Naive thymus-derived CD4-positive, alpha-beta T cell (primary cell): ENCODE measurements at regions of chr4 and their contacts with region 1.

Region 1: GRCh38 chr4:56799824-56800756 is 21.4 kb downstream of the SPINK2 start:
- DNase-seq: peak; percentile 57 to 88 (median 81)
- ATAC-seq: peak; percentile 99
- H3K4me3 ChIP-seq: peak overlapping the region; percentile 56
- H3K4me3 Mint-ChIP-seq: peak overlapping the region; percentile 91 to 100 (median 94)
- H3K27ac ChIP-seq: peak overlapping the region; percentile 72
- H3K27ac Mint-ChIP-seq: peak overlapping the region; percentile 40 to 96 (median 92)
- H3K4me1 ChIP-seq: peaks cover 0 to 2% of the 10 kb centered on the region in 2 donors
- H3K4me1 Mint-ChIP-seq: peaks cover 5 to 33% (median 22%) of the 10 kb centered on the region in 7 donors
- H3K27me3 ChIP-seq: no peaks in the 10 kb centered on the region
- H3K27me3 Mint-ChIP-seq: peaks cover 0 to 28% (median 0%) of the 10 kb centered on the region in 5 donors

Region 2: GRCh38 chr4:56424697-56425514 is 375.2 kb before region 1 on chr4:
- CTCF ChIA-PET with region 1: interaction called, 13 read pairs
- POLR2A ChIA-PET with region 1: no interaction called
- intact Hi-C with region 1: loop called in 1 of 2 experiments (anchors 1 kb)
- DNase-seq: peak in 7 of 9 donors; percentile 22 to 59 (median 48)
- ATAC-seq: peak; percentile 49
- H3K4me3 ChIP-seq: no peak overlapping the region
- H3K4me3 Mint-ChIP-seq: no peak overlapping the region
- H3K27ac ChIP-seq: no peak overlapping the region
- H3K27ac Mint-ChIP-seq: peak overlapping the region in 1 of 9 donors; percentile 1
- H3K4me1 ChIP-seq: no peaks in the 10 kb centered on the region
- H3K4me1 Mint-ChIP-seq: peaks cover 4 to 27% (median 13%) of the 10 kb centered on the region in 7 donors
- H3K27me3 ChIP-seq: no peaks in the 10 kb centered on the region
- H3K27me3 Mint-ChIP-seq: no peaks in the 10 kb centered on the region

Region 3: GRCh38 chr4:56505269-56506130 is 294.6 kb before region 1 on chr4 and contains the start of gene ARL9:
- CTCF ChIA-PET with region 1: no interaction called
- POLR2A ChIA-PET with region 1: no interaction called
- intact Hi-C with region 1: loop called in 1 of 2 experiments (anchors 1 kb)
- DNase-seq: peak; percentile 49 to 77 (median 68)
- ATAC-seq: peak; percentile 96
- H3K4me3 ChIP-seq: peak within 1 kb of the TSS; percentile 67
- H3K4me3 Mint-ChIP-seq: peak within 1 kb of the TSS; percentile 66 to 96 (median 88)
- H3K27ac ChIP-seq: peak within 1 kb of the TSS; percentile 44
- H3K27ac Mint-ChIP-seq: peak within 1 kb of the TSS in 8 of 9 donors; percentile 49 to 88 (median 72)
- H3K4me1 ChIP-seq: peaks cover 7 to 8% of the 10 kb centered on the region in 2 donors
- H3K4me1 Mint-ChIP-seq: peaks cover 13 to 20% (median 17%) of the 10 kb centered on the region in 7 donors
- H3K27me3 ChIP-seq: no peaks in the 10 kb centered on the region
- H3K27me3 Mint-ChIP-seq: peaks cover 0 to 12% (median 0%) of the 10 kb centered on the region in 5 donors
- total RNA-seq, gene ARL9: 0.19 to 0.43 TPM in 2 of 5 experiments, not detected in the others

Region 4: DNA sequence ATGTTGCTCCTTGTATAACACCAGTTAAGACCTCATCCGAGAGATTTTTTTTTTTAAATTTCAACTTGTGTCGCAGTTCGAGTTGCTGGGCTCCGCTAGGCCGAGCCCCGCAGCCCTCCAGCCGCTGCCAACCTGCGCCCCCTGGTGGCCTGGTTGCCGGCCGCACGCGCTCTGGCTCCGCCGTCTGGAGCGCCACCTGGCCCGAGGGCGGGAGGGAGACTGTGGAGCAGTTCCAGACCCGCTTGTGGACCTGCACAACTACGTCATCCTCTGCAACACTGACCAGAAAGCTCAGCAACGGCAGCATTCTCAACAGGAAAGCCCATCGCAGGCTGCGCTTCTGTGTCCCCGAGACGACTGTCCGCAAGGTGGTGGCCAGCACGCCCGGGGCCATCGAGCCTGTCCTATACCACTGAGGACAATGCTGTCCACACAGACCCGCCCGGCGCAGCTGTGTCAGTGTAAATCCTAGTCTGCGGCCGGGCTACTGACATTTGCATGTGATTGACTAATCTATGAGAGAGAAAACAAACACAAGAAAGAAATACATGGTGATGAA is 255.4 kb before region 1 on chr4:
- CTCF ChIA-PET with region 1: no interaction called
- POLR2A ChIA-PET with region 1: interaction called, 3 read pairs
- intact Hi-C with region 1: loop called (anchors 1 kb)
- DNase-seq: peak; percentile 72 to 93 (median 84)
- ATAC-seq: peak; percentile 100
- H3K4me3 ChIP-seq: peak overlapping the region; percentile 68
- H3K4me3 Mint-ChIP-seq: peak overlapping the region; percentile 18 to 81 (median 74)
- H3K27ac ChIP-seq: no peak overlapping the region
- H3K27ac Mint-ChIP-seq: peak overlapping the region in 7 of 9 donors; percentile 25 to 79 (median 63)
- H3K4me1 ChIP-seq: peaks cover 0 to 4% of the 10 kb centered on the region in 2 donors
- H3K4me1 Mint-ChIP-seq: peaks cover 8 to 22% (median 21%) of the 10 kb centered on the region in 7 donors
- H3K27me3 ChIP-seq: no peaks in the 10 kb centered on the region
- H3K27me3 Mint-ChIP-seq: peaks cover 0 to 25% (median 7%) of the 10 kb centered on the region in 5 donors

Region 5: GRCh38 chr4:56655209-56655626 is 144.9 kb before region 1 on chr4:
- CTCF ChIA-PET with region 1: no interaction called
- POLR2A ChIA-PET with region 1: no interaction called
- intact Hi-C with region 1: loop called (anchors 1 to 5 kb)
- DNase-seq: peak in 4 of 9 donors; percentile 14 to 26 (median 22)
- ATAC-seq: peak; percentile 33
- H3K4me3 ChIP-seq: peak overlapping the region; percentile 66
- H3K4me3 Mint-ChIP-seq: peak overlapping the region; percentile 85 to 99 (median 90)
- H3K27ac ChIP-seq: no peak overlapping the region
- H3K27ac Mint-ChIP-seq: peak overlapping the region in 7 of 9 donors; percentile 2 to 82 (median 28)
- H3K4me1 ChIP-seq: peaks cover 16 to 36% of the 10 kb centered on the region in 2 donors
- H3K4me1 Mint-ChIP-seq: peaks cover 16 to 59% (median 34%) of the 10 kb centered on the region in 7 donors
- H3K27me3 ChIP-seq: peaks cover 0 to 3% of the 10 kb centered on the region in 2 donors
- H3K27me3 Mint-ChIP-seq: peaks cover 9 to 43% (median 33%) of the 10 kb centered on the region in 5 donors

Region 6: DNA sequence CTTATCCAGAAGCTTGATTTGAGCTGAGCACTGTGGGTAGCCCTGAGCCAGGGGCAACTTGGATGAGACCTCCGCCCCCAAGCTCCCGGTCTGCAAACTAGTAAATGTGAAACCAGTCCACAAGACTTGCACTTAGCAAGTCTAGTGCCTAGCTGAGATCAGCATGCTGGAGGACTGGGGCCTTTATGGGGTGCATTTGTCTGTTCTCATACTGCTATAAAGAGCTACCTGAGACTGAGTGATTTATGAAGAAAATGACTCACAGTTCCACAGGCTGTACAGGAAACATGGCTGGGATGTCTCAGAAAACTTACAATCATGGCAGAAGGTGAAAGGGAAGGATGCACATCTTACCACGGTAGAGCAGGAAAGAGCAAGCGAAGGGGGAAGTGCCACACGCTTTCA is 76.9 kb before region 1 on chr4:
- CTCF ChIA-PET with region 1: no interaction called
- POLR2A ChIA-PET with region 1: no interaction called
- intact Hi-C with region 1: loop called in 1 of 2 experiments (anchors 2 kb)
- DNase-seq: peak in 1 of 9 donors; percentile 35
- ATAC-seq: no peak
- H3K4me3 ChIP-seq: no peak overlapping the region
- H3K4me3 Mint-ChIP-seq: peak overlapping the region in 1 of 10 donors; percentile 8
- H3K27ac ChIP-seq: no peak overlapping the region
- H3K27ac Mint-ChIP-seq: peak overlapping the region in 2 of 9 donors; percentile 3 to 17
- H3K4me1 ChIP-seq: no peaks in the 10 kb centered on the region
- H3K4me1 Mint-ChIP-seq: peaks cover 0 to 16% (median 6%) of the 10 kb centered on the region in 7 donors
- H3K27me3 ChIP-seq: no peaks in the 10 kb centered on the region
- H3K27me3 Mint-ChIP-seq: no peaks in the 10 kb centered on the region

Region 7: DNA sequence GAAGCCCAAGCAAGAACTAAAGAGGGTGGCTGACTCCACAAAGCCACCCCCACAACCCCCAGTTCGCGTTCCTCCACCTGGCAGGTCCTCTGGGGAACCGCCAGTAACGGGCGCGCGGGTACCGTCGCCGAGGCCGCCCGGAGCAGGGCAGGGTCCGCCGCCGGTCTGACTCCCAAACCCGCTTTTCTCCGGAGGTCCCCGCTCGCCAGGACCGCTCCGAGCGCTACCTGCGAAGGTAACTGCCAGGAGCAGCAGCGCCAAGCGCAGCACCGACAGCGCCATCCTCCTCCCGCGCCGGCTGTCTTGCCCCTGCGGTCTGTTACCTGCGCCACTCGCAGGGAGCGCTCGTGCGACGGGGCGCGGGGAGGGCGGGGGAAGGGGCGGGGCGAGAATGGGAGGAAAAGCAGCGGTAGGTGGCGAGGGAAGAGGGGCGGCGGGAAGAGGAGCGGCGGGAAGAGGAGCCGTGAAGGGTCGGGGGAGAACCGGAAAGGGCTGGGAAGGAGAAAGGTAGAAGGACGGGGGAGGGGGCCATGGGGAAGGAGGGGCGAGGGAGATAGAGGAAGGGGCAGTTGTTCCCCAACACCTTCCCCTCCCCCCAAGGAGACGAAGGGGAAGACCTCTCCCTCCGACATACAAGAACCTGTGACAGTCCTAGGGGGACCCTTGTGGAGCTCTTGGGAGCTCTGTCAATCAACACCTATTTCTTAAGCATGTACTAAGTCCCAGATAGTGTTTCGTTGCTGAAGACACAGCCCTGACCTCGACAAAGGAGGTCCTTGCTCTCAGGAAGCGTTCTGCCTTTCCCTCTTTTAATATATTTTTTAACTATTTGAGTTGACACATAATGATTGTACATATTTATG is 21.5 kb after region 1 on chr4 and contains the start of gene SPINK2:
- CTCF ChIA-PET with region 1: interaction called, 5 read pairs
- POLR2A ChIA-PET with region 1: interaction called, 4 read pairs
- intact Hi-C with region 1: loop called (anchors 1 to 2 kb)
- DNase-seq: peak; percentile 49 to 76 (median 68)
- ATAC-seq: peak; percentile 95
- H3K4me3 ChIP-seq: peak within 1 kb of the TSS; percentile 68
- H3K4me3 Mint-ChIP-seq: peak within 1 kb of the TSS; percentile 44 to 86 (median 80)
- H3K27ac ChIP-seq: no peak within 1 kb of the TSS
- H3K27ac Mint-ChIP-seq: peak within 1 kb of the TSS in 6 of 9 donors; percentile 57 to 79 (median 71)
- H3K4me1 ChIP-seq: peaks cover 12 to 17% of the 10 kb centered on the region in 2 donors
- H3K4me1 Mint-ChIP-seq: peaks cover 16 to 41% (median 35%) of the 10 kb centered on the region in 7 donors
- H3K27me3 ChIP-seq: no peaks in the 10 kb centered on the region
- H3K27me3 Mint-ChIP-seq: peaks cover 0 to 56% (median 0%) of the 10 kb centered on the region in 5 donors
- total RNA-seq, gene SPINK2: 0.99 to 5.8 (median 4.4) TPM

Region 8: GRCh38 chr4:56953680-56954520 is 153.8 kb after region 1 on chr4:
- CTCF ChIA-PET with region 1: no interaction called
- POLR2A ChIA-PET with region 1: no interaction called
- intact Hi-C with region 1: no loop called
- DNase-seq: no peak
- ATAC-seq: no peak
- H3K4me3 ChIP-seq: no peak overlapping the region
- H3K4me3 Mint-ChIP-seq: no peak overlapping the region
- H3K27ac ChIP-seq: no peak overlapping the region
- H3K27ac Mint-ChIP-seq: no peak overlapping the region
- H3K4me1 ChIP-seq: no peaks in the 10 kb centered on the region
- H3K4me1 Mint-ChIP-seq: peaks cover 0 to 4% (median 0%) of the 10 kb centered on the region in 7 donors
- H3K27me3 ChIP-seq: no peaks in the 10 kb centered on the region
- H3K27me3 Mint-ChIP-seq: no peaks in the 10 kb centered on the region

Region 9: DNA sequence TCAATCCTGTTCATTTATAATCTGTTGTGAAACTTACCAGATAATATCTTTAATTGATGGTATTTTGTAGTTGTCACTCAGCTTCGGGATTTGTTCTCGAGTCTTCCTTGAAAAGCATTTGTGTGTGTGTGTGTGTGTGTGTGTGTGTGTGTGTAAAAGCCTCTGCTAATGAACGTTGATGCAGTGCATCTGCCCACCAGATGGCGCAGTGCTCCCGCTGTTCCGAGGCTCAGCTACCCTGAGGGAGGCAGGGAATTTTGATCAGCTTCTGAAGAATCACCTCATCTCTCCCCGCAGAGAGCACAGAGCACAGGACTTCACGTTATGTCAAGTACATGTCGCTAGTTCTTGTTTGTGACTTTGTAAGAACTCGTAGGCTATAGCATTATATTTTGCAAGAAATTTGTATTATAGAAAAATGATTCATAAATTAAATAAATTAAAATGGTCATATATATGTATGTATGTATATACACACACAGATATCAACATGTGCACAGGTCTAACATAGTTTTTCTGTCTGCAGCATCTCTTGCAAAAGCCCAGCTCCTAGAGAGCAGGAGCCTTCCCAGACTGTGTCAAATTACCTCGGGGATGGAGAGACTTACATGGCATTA is 626.8 kb after region 1 on chr4:
- CTCF ChIA-PET with region 1: no interaction called
- POLR2A ChIA-PET with region 1: no interaction called
- intact Hi-C with region 1: no loop called
- DNase-seq: peak in 1 of 9 donors; percentile 25
- ATAC-seq: peak; percentile 51
- H3K4me3 ChIP-seq: no peak overlapping the region
- H3K4me3 Mint-ChIP-seq: no peak overlapping the region
- H3K27ac ChIP-seq: no peak overlapping the region
- H3K27ac Mint-ChIP-seq: no peak overlapping the region
- H3K4me1 ChIP-seq: no peaks in the 10 kb centered on the region
- H3K4me1 Mint-ChIP-seq: no peaks in the 10 kb centered on the region
- H3K27me3 ChIP-seq: no peaks in the 10 kb centered on the region
- H3K27me3 Mint-ChIP-seq: peaks cover 0 to 13% (median 7%) of the 10 kb centered on the region in 5 donors

Region 10: DNA sequence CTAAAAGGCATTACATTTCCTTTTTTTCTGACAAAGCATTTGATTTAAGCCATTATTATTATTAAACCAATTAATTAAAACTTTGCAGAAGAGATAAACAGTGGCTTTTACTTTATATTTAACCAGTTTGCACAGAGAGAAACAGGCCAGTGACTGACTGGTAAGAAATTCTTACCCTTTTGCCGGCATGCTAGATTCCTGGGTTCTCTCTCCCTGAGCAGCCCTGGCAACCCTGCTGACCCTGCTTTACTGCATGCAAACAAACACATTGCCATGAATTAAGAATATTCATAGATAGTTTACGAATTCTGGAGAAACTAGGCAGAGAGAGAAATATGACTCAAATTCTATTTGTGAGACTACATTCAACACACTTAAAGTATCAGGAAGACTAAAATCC is 1691.5 kb after region 1 on chr4:
- CTCF ChIA-PET with region 1: no interaction called
- POLR2A ChIA-PET with region 1: no interaction called
- intact Hi-C with region 1: no loop called
- DNase-seq: no peak
- ATAC-seq: no peak
- H3K4me3 ChIP-seq: no peak overlapping the region
- H3K4me3 Mint-ChIP-seq: no peak overlapping the region
- H3K27ac ChIP-seq: no peak overlapping the region
- H3K27ac Mint-ChIP-seq: no peak overlapping the region
- H3K4me1 ChIP-seq: no peaks in the 10 kb centered on the region
- H3K4me1 Mint-ChIP-seq: no peaks in the 10 kb centered on the region
- H3K27me3 ChIP-seq: no peaks in the 10 kb centered on the region
- H3K27me3 Mint-ChIP-seq: no peaks in the 10 kb centered on the region